Caco-2 (cell line): ENCODE measurements at regions of chr15 and their contacts with region 1.

Region 1: GRCh38 chr15:64507293-64507802 is 47.0 kb downstream of the ZNF609 start:
- DNase-seq: peak; percentile 44 to 56
- H3K4me3 ChIP-seq: no peak overlapping the region
- H3K4me3 Mint-ChIP-seq: peak overlapping the region; percentile 34
- H3K27ac Mint-ChIP-seq: peak overlapping the region; percentile 63
- H3K4me1 ChIP-seq: peaks cover 32% of the 10 kb centered on the region
- H3K4me1 Mint-ChIP-seq: peaks cover 38% of the 10 kb centered on the region
- H3K27me3 ChIP-seq: no peaks in the 10 kb centered on the region
- H3K27me3 Mint-ChIP-seq: no peaks in the 10 kb centered on the region
- CTCF ChIP-seq: no peak

Region 2: GRCh38 chr15:64029110-64029509 is 478.2 kb before region 1 on chr15:
- CTCF ChIA-PET with region 1: no interaction called
- POLR2A ChIA-PET with region 1: no interaction called
- intact Hi-C with region 1: no loop called
- DNase-seq: no peak
- H3K4me3 ChIP-seq: no peak overlapping the region
- H3K4me3 Mint-ChIP-seq: no peak overlapping the region
- H3K27ac Mint-ChIP-seq: no peak overlapping the region
- H3K4me1 ChIP-seq: no peaks in the 10 kb centered on the region
- H3K4me1 Mint-ChIP-seq: peaks cover 7% of the 10 kb centered on the region
- H3K27me3 ChIP-seq: no peaks in the 10 kb centered on the region
- H3K27me3 Mint-ChIP-seq: no peaks in the 10 kb centered on the region
- CTCF ChIP-seq: no peak

Region 3: GRCh38 chr15:64566629-64567427 is 59.5 kb after region 1 on chr15:
- CTCF ChIA-PET with region 1: no interaction called
- POLR2A ChIA-PET with region 1: no interaction called
- intact Hi-C with region 1: loop called (anchors 5 kb)
- DNase-seq: peak; percentile 25 to 53
- H3K4me3 ChIP-seq: no peak overlapping the region
- H3K4me3 Mint-ChIP-seq: peak overlapping the region; percentile 4
- H3K27ac Mint-ChIP-seq: no peak overlapping the region
- H3K4me1 ChIP-seq: peaks cover 40% of the 10 kb centered on the region
- H3K4me1 Mint-ChIP-seq: peaks cover 38% of the 10 kb centered on the region
- H3K27me3 ChIP-seq: no peaks in the 10 kb centered on the region
- H3K27me3 Mint-ChIP-seq: no peaks in the 10 kb centered on the region
- CTCF ChIP-seq: no peak